ENCODE measurements at regions of chr5 and their contacts with region 1.

Region 1: GRCh38 chr5:143693651-143694252 is 118.2 kb upstream of the HMHB1 start:
- DNase-seq: no peak
- H3K4me3 ChIP-seq: no peak overlapping the region
- H3K27ac ChIP-seq: no peak overlapping the region
- H3K4me1 ChIP-seq: peaks cover 11% of the 10 kb centered on the region
- H3K27me3 ChIP-seq: no peaks in the 10 kb centered on the region
- CTCF ChIP-seq: no peak

Region 2: GRCh38 chr5:143741421-143741820 is 47.7 kb after region 1 on chr5:
- CTCF ChIA-PET with region 1: no interaction called
- dilution Hi-C with region 1: loop called (anchors 5 kb)
- in situ Hi-C with region 1: no loop called
- intact Hi-C with region 1: no loop called
- DNase-seq: no peak
- H3K4me3 ChIP-seq: no peak overlapping the region
- H3K27ac ChIP-seq: no peak overlapping the region
- H3K4me1 ChIP-seq: no peaks in the 10 kb centered on the region
- H3K27me3 ChIP-seq: no peaks in the 10 kb centered on the region
- CTCF ChIP-seq: no peak

Region 3: GRCh38 chr5:143758750-143759149 is 65.0 kb after region 1 on chr5:
- CTCF ChIA-PET with region 1: no interaction called
- dilution Hi-C with region 1: no loop called
- in situ Hi-C with region 1: no loop called
- intact Hi-C with region 1: no loop called
- DNase-seq: no peak
- H3K4me3 ChIP-seq: no peak overlapping the region
- H3K27ac ChIP-seq: no peak overlapping the region
- H3K4me1 ChIP-seq: no peaks in the 10 kb centered on the region
- H3K27me3 ChIP-seq: peaks cover 2% of the 10 kb centered on the region
- CTCF ChIP-seq: no peak

Region 4: GRCh38 chr5:143968011-143968878 is 274.5 kb after region 1 on chr5:
- CTCF ChIA-PET with region 1: no interaction called
- dilution Hi-C with region 1: no loop called
- in situ Hi-C with region 1: no loop called
- intact Hi-C with region 1: loop called (anchors 10 kb)
- DNase-seq: peak; percentile 70
- H3K4me3 ChIP-seq: no peak overlapping the region
- H3K27ac ChIP-seq: no peak overlapping the region
- H3K4me1 ChIP-seq: peaks cover 7% of the 10 kb centered on the region
- H3K27me3 ChIP-seq: no peaks in the 10 kb centered on the region
- CTCF ChIP-seq: peak; percentile 39 to 59

Measured in mammary epithelial cell (primary cell).